Caco-2 (cell line): ENCODE measurements at regions of chr2 and their contacts with region 1.

Region 1: DNA sequence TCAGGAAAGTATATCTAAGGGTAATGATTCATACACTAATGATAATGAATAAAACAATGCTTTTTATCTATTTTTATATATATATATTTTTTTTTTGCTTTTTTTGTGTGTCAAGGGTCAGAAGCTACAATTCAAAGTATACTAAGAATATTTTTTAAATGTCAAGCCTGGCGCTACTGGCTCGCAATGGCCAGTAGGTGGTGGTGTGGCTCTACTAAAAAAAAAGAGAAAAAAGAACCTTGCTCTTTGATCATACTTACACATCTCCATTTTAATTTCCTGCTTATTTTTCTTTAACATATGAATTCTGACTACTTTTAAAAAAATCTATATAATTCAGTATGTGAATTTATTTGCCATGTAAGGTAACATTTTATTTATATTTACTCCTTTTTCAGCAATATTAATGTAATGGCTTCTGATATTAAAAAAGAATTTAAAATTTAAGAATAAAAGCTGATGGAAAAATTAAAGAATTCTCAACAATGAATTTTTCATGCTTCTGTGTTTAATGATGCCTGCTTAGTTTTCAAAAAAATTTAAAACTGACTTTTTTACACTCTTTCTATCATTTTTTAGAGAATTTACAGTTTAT is 232.9 kb downstream of the GULP1 start:
- DNase-seq: peak in 1 of 2 experiments; percentile 63
- H3K4me3 ChIP-seq: no peak overlapping the region
- H3K4me3 Mint-ChIP-seq: no peak overlapping the region
- H3K27ac Mint-ChIP-seq: no peak overlapping the region
- H3K4me1 ChIP-seq: no peaks in the 10 kb centered on the region
- H3K4me1 Mint-ChIP-seq: peaks cover 11% of the 10 kb centered on the region
- H3K27me3 ChIP-seq: no peaks in the 10 kb centered on the region
- H3K27me3 Mint-ChIP-seq: no peaks in the 10 kb centered on the region
- CTCF ChIP-seq: peak; percentile 76 to 79

Region 2: DNA sequence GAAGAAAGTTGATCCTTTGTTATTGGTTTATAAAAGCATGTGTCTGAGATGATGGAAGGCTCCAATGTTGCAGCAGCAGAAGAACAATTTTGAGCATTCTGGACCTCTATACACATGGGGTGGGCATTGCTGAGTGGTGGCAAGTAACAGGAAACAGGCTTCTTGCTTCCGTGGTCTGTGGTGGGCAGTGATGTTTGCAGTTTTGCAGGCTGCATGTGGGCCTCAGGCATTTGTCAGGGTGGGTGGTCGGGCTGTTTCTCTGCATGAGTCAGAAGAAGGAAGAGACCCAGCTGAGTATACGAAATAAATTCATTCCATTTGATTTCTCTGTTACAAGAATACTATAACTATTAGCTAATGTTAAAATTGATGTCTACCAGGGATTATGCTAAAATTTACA is 210.1 kb after region 1 on chr2:
- CTCF ChIA-PET with region 1: no interaction called
- POLR2A ChIA-PET with region 1: no interaction called
- intact Hi-C with region 1: loop called (anchors 10 kb)
- DNase-seq: no peak
- H3K4me3 ChIP-seq: no peak overlapping the region
- H3K4me3 Mint-ChIP-seq: no peak overlapping the region
- H3K27ac Mint-ChIP-seq: no peak overlapping the region
- H3K4me1 ChIP-seq: no peaks in the 10 kb centered on the region
- H3K4me1 Mint-ChIP-seq: no peaks in the 10 kb centered on the region
- H3K27me3 ChIP-seq: no peaks in the 10 kb centered on the region
- H3K27me3 Mint-ChIP-seq: peaks cover 4% of the 10 kb centered on the region
- CTCF ChIP-seq: no peak

Region 3: GRCh38 chr2:188978291-188979081 is 453.9 kb after region 1 on chr2:
- CTCF ChIA-PET with region 1: interaction called, 10 read pairs
- POLR2A ChIA-PET with region 1: no interaction called
- intact Hi-C with region 1: loop called (anchors 1 kb)
- DNase-seq: peak; percentile 50 to 53
- H3K4me3 ChIP-seq: no peak overlapping the region
- H3K4me3 Mint-ChIP-seq: no peak overlapping the region
- H3K27ac Mint-ChIP-seq: peak overlapping the region; percentile 57
- H3K4me1 ChIP-seq: peaks cover 12% of the 10 kb centered on the region
- H3K4me1 Mint-ChIP-seq: peaks cover 14% of the 10 kb centered on the region
- H3K27me3 ChIP-seq: no peaks in the 10 kb centered on the region
- H3K27me3 Mint-ChIP-seq: no peaks in the 10 kb centered on the region
- CTCF ChIP-seq: peak; percentile 36 to 61

Region 4: DNA sequence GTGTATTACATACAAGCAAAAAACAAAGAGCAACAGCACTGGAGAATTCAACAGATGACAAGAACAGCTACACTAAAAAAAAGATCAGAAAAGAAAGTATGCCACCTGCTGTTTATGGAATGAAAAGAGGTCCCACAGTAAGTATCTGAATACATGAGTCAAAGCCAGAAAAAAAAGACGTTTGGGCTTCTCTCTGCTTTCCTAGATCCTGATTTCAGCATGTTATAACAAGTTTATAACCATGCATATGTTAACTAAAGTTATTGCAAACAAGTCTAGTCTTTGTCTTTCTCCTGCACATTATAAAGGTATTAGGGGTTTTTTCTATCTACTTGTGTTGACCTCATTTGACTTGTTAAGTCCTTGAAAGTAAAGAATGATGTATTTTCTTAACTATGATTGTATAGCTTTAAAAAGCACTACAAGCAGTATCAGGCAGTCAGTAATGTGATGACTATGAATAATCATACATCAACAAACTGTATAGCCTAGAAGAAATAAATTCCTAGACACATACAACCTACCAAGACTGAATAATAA is 763.4 kb after region 1 on chr2:
- CTCF ChIA-PET with region 1: no interaction called
- POLR2A ChIA-PET with region 1: no interaction called
- intact Hi-C with region 1: loop called (anchors 5 kb)
- DNase-seq: peak in 1 of 2 experiments; percentile 60
- H3K4me3 ChIP-seq: no peak overlapping the region
- H3K4me3 Mint-ChIP-seq: no peak overlapping the region
- H3K27ac Mint-ChIP-seq: no peak overlapping the region
- H3K4me1 ChIP-seq: peaks cover 5% of the 10 kb centered on the region; the same call in 1 of the 2 replicates
- H3K4me1 Mint-ChIP-seq: peaks cover 15% of the 10 kb centered on the region
- H3K27me3 ChIP-seq: no peaks in the 10 kb centered on the region
- H3K27me3 Mint-ChIP-seq: no peaks in the 10 kb centered on the region
- CTCF ChIP-seq: peak; percentile 38 to 64